ENCODE measurements at regions of chr12 and their contacts with region 1.

Region 1: GRCh38 chr12:49707128-49707811 is at the start of gene FMNL3:
- DNase-seq: peak; percentile 98
- H3K4me3 Mint-ChIP-seq: peak within 1 kb of the TSS; percentile 90
- H3K27ac Mint-ChIP-seq: peak within 1 kb of the TSS; percentile 88
- H3K4me1 Mint-ChIP-seq: peaks cover 44% of the 10 kb centered on the region
- H3K27me3 Mint-ChIP-seq: peaks cover 26% of the 10 kb centered on the region
- total RNA-seq, gene FMNL3: 37.4 to 38.2 TPM

Region 2: GRCh38 chr12:49636979-49637755 is 70.1 kb before region 1 on chr12:
- CTCF ChIA-PET with region 1: interaction called, 22 read pairs
- POLR2A ChIA-PET with region 1: no interaction called
- DNase-seq: peak; percentile 78
- H3K4me3 Mint-ChIP-seq: no peak overlapping the region
- H3K27ac Mint-ChIP-seq: peak overlapping the region; percentile 58
- H3K4me1 Mint-ChIP-seq: peaks cover 12% of the 10 kb centered on the region
- H3K27me3 Mint-ChIP-seq: no peaks in the 10 kb centered on the region

Region 3: DNA sequence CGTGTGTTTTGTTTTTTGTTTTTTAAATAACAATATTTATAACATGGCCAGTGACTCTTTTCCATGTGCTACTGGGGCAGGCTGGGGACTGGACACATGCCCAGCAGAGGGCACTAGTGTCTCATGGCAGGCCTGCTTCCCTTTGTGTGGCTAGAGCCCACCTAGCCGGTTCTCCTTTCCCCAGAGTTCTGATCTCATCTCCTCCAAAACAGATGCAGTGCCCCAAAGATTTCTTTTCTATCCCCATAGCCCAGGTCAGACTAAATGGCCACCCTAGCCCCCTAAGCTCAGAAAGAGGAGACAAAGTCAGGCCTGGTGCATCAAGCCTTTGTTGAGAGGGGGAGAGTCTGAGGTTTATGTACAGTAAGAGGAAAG is 62.7 kb before region 1 on chr12:
- CTCF ChIA-PET with region 1: interaction called, 44 read pairs
- POLR2A ChIA-PET with region 1: interaction called, 4 read pairs
- DNase-seq: peak; percentile 87
- H3K4me3 Mint-ChIP-seq: no peak overlapping the region
- H3K27ac Mint-ChIP-seq: peak overlapping the region; percentile 87
- H3K4me1 Mint-ChIP-seq: peaks cover 40% of the 10 kb centered on the region
- H3K27me3 Mint-ChIP-seq: no peaks in the 10 kb centered on the region

Region 4: GRCh38 chr12:49687941-49688340 is 19.3 kb before region 1 on chr12:
- CTCF ChIA-PET with region 1: interaction called, 47 read pairs
- POLR2A ChIA-PET with region 1: interaction called, 4 read pairs
- DNase-seq: no peak
- H3K4me3 Mint-ChIP-seq: no peak overlapping the region
- H3K27ac Mint-ChIP-seq: no peak overlapping the region
- H3K4me1 Mint-ChIP-seq: peaks cover 32% of the 10 kb centered on the region
- H3K27me3 Mint-ChIP-seq: no peaks in the 10 kb centered on the region

Region 5: GRCh38 chr12:49733219-49734017 is 26.1 kb after region 1 on chr12:
- CTCF ChIA-PET with region 1: no interaction called
- POLR2A ChIA-PET with region 1: no interaction called
- DNase-seq: no peak
- H3K4me3 Mint-ChIP-seq: no peak overlapping the region
- H3K27ac Mint-ChIP-seq: no peak overlapping the region
- H3K4me1 Mint-ChIP-seq: peaks cover 5% of the 10 kb centered on the region
- H3K27me3 Mint-ChIP-seq: peaks cover 14% of the 10 kb centered on the region

Measured in activated CD4-positive, alpha-beta T cell treated with anti-CD3 and anti-CD28 coated beads, Interleukin-2, amount 10 ng/mL, durations not matched to agents 7 days and 5 days (primary cell).